ENCODE measurements at regions of chr5 and their contacts with region 1.

Region 1: GRCh38 chr5:139765409-139766217 is 30.0 kb upstream of the PSD2 start:
- DNase-seq: peak; percentile 74 to 76
- ATAC-seq: peak; percentile 79 to 93
- H3K4me3 ChIP-seq: peak overlapping the region; percentile 51
- H3K27ac ChIP-seq: peak overlapping the region; percentile 80 to 92
- H3K4me1 ChIP-seq: no peaks in the 10 kb centered on the region
- CTCF ChIP-seq: peak; percentile 99
- EP300 ChIP-seq: no peak
- POLR2A ChIP-seq: no peak
- RAD21 ChIP-seq: peak; percentile 78 to 94

Region 2: DNA sequence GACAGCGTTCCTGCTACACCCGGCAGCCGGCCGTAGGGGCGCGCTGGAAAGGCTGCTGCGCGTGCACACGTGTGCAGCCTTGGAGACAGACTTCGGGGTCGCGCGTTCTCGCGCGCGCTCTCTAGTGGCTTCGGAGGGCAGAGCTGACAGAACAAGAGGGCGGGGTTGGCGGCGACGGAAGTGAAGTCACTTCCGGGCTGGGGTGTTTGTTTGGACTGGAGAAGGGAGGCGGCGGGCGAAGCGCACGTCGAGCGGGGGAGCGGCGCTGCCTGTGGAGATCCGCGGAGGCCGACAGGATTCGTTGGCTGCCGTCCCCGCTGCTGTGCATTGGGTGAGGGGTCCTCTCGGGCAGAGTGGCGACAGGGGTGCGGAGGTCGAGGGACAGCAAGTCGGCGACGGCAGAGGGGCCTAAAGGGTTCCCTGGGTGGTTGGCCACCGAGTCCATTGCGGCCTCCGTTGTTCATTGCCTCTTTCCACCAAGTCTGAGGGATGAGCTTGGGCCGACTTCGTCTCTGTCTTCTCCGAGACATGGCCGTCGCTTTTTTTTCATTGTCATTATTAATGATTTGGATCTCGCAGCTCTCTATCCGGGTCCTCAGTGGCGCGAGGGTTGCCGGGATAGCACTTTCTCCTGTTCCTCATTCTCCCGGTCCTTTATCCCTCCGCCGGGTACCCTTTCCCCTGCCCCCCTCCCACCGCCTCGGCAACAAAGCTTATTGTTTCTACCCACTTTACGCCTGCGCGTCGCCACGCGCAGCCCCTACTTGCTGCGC is 423.8 kb before region 1 on chr5 and contains the start of gene PAIP2:
- CTCF ChIA-PET with region 1: no interaction called
- POLR2A ChIA-PET with region 1: no interaction called
- DNase-seq: peak; percentile 88 to 98
- ATAC-seq: peak; percentile 87 to 92
- H3K4me3 ChIP-seq: peak within 1 kb of the TSS; percentile 81
- H3K27ac ChIP-seq: peak within 1 kb of the TSS; percentile 90 to 91
- H3K4me1 ChIP-seq: peaks cover 19% of the 10 kb centered on the region; the same call in 2 of the 3 replicates
- CTCF ChIP-seq: peak; percentile 61
- EP300 ChIP-seq: no peak
- POLR2A ChIP-seq: peak; percentile 78
- RAD21 ChIP-seq: peak; percentile 45 to 58
- polyA plus RNA-seq, gene PAIP2: 91.4 and 128 TPM in 2 replicates

Region 3: GRCh38 chr5:139422307-139422893 is 343.2 kb before region 1 on chr5:
- CTCF ChIA-PET with region 1: interaction called, 15 read pairs
- POLR2A ChIA-PET with region 1: no interaction called
- DNase-seq: peak; percentile 69 to 85
- ATAC-seq: peak; percentile 87 to 92
- H3K4me3 ChIP-seq: no peak overlapping the region
- H3K27ac ChIP-seq: no peak overlapping the region
- H3K4me1 ChIP-seq: no peaks in the 10 kb centered on the region
- CTCF ChIP-seq: peak; percentile 95
- EP300 ChIP-seq: no peak
- POLR2A ChIP-seq: no peak
- RAD21 ChIP-seq: peak; percentile 92 to 97

Region 4: GRCh38 chr5:139660923-139661814 is 104.4 kb before region 1 on chr5:
- CTCF ChIA-PET with region 1: interaction called, 19 read pairs
- POLR2A ChIA-PET with region 1: no interaction called
- DNase-seq: peak in 1 of 2 experiments; percentile 64
- ATAC-seq: peak; percentile 62 to 64
- H3K4me3 ChIP-seq: peak overlapping the region; percentile 31; the same call in 2 of the 3 replicates
- H3K27ac ChIP-seq: peak overlapping the region; percentile 87 to 98
- H3K4me1 ChIP-seq: peaks cover 84% of the 10 kb centered on the region
- CTCF ChIP-seq: no peak
- EP300 ChIP-seq: no peak
- POLR2A ChIP-seq: no peak
- RAD21 ChIP-seq: no peak

Region 5: DNA sequence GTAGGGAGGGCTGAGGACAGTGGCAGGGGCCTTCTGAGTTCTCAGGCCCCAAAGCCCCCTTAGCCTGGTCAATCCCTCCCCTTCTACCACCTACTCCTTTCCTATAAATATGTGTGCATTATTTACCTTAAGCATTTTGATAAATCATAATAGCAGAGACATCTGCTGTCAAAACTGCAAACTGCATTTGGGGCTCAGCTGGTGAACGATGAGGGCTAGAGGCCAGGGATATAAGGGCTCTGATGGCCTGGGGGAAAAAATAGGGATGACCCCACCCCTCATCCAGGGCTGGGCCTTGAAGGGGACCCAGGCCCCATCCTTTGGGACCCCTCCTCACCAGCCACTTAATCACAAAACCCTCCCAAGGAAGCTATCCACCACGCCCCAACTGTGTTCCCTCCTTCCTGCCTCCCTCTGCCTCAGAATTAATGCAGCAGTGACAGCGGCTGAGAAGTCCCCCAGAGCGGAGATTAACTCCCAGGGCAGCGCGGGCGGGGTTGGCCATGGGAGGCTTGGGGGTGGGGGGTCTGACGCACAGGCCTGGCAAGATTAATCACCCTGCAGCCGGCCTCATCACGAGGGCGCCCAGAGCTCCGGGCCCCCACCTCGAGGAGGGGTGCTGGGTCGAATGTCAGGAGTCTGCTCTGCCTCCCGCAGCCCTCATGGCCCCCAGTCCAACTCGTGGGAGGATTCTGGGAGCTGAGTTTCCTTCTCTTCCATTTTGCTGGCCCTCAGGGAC is 75.4 kb before region 1 on chr5:
- CTCF ChIA-PET with region 1: interaction called, 40 read pairs
- POLR2A ChIA-PET with region 1: no interaction called
- DNase-seq: peak; percentile 35 to 41
- ATAC-seq: peak; percentile 52 to 69
- H3K4me3 ChIP-seq: no peak overlapping the region
- H3K27ac ChIP-seq: peak overlapping the region; percentile 20 to 69; a peak in 5 of 6 replicates
- H3K4me1 ChIP-seq: peaks cover 32% of the 10 kb centered on the region
- CTCF ChIP-seq: peak; percentile 78
- EP300 ChIP-seq: no peak
- POLR2A ChIP-seq: no peak
- RAD21 ChIP-seq: peak; percentile 79 to 80

Region 6: GRCh38 chr5:139711067-139711905 is 54.3 kb before region 1 on chr5:
- CTCF ChIA-PET with region 1: interaction called, 29 read pairs
- POLR2A ChIA-PET with region 1: no interaction called
- DNase-seq: peak; percentile 31 to 46
- ATAC-seq: peak; percentile 37 to 65; a peak in 5 of 6 replicates
- H3K4me3 ChIP-seq: peak overlapping the region; percentile 88
- H3K27ac ChIP-seq: peak overlapping the region; percentile 65 to 87
- H3K4me1 ChIP-seq: peaks cover 19% of the 10 kb centered on the region; the same call in 2 of the 3 replicates
- CTCF ChIP-seq: no peak
- EP300 ChIP-seq: no peak
- POLR2A ChIP-seq: no peak
- RAD21 ChIP-seq: peak; percentile 24 to 39; a peak in 2 of 5 replicates

Region 7: DNA sequence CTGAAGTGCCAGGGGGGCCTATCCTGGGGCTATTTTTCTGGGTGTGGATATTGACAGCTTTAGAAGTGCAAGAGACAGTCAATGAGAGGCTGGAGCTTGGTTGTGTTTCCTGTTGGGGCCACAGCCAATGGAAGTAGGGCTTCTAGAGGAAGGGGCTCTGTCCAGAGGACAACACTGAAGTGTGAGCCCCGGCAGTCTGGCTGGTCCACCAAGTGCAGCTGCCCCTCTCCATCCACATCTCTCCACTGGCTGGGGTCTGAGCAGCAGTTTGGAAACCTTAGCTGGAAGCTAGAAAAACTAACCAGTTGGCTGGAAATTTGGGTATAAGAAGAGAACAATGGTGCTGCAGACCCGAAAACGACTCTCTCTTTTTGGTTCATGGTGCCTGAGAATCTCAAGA is 34.3 kb before region 1 on chr5:
- CTCF ChIA-PET with region 1: interaction called, 12 read pairs
- POLR2A ChIA-PET with region 1: interaction called, 5 read pairs
- DNase-seq: no peak
- ATAC-seq: no peak
- H3K4me3 ChIP-seq: no peak overlapping the region
- H3K27ac ChIP-seq: no peak overlapping the region
- H3K4me1 ChIP-seq: no peaks in the 10 kb centered on the region
- CTCF ChIP-seq: no peak
- EP300 ChIP-seq: no peak
- POLR2A ChIP-seq: no peak
- RAD21 ChIP-seq: no peak

Region 8: GRCh38 chr5:140054086-140054689 is 288.6 kb after region 1 on chr5:
- CTCF ChIA-PET with region 1: no interaction called
- POLR2A ChIA-PET with region 1: no interaction called
- DNase-seq: no peak
- ATAC-seq: no peak
- H3K4me3 ChIP-seq: no peak overlapping the region
- H3K27ac ChIP-seq: no peak overlapping the region
- H3K4me1 ChIP-seq: no peaks in the 10 kb centered on the region
- CTCF ChIP-seq: no peak
- EP300 ChIP-seq: no peak
- POLR2A ChIP-seq: no peak
- RAD21 ChIP-seq: no peak